ENCODE measurements at regions of chr7 and their contacts with region 1.

Region 1: DNA sequence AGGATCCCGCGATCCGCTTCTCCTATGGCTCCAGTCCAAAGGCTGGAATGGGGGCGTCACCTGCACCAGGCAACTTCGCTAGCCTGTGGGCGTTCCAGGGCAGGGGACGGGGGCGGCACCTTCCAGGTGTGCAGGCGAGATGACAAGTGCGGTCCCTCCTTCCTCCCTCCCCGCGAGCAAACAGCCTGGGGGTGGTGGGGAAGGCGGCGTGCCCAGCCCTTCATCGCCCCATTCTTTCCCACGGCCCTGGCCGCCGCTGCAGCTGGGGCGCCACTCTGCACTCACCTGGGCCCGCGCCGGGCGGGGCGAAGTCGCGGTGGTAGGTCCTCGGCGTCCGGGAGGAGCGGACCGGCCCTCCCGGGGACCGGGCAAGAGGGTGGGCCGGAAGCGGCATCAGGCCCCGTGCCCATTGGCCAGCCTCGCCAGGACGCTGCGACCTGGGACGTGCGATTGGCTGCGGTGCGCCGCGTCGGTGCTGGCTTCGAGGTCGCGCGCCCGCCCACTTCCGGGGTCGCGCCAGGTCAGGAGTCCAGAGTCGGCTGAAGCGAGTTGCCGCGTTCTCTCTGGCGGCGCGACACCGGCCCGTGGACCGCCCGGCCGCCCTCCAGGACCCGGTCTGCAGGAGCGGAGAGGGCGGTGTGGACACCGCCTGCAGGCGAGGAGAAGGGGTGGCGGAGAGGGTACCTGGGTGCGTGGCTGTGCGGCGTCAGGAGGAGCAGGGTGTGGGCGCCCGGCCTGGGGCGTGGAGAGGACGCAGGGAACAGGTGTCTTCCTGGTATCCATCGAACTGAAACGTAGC is at the start of gene TECPR1:
- DNase-seq: peak; percentile 68 to 94 (median 81)
- ATAC-seq: peak; percentile 70
- H3K4me3 ChIP-seq: peak within 1 kb of the TSS; percentile 90
- H3K4me3 Mint-ChIP-seq: peak within 1 kb of the TSS; percentile 94
- H3K27ac ChIP-seq: peak within 1 kb of the TSS; percentile 85 to 93
- H3K27ac Mint-ChIP-seq: peak within 1 kb of the TSS; percentile 98
- H3K4me1 ChIP-seq: peaks cover 64% of the 10 kb centered on the region
- H3K4me1 Mint-ChIP-seq: peaks cover 71% of the 10 kb centered on the region
- H3K27me3 ChIP-seq: no peaks in the 10 kb centered on the region
- H3K27me3 Mint-ChIP-seq: no peaks in the 10 kb centered on the region
- CTCF ChIP-seq: no peak
- total RNA-seq, gene TECPR1: 85.9 to 90.4 TPM

Region 2: DNA sequence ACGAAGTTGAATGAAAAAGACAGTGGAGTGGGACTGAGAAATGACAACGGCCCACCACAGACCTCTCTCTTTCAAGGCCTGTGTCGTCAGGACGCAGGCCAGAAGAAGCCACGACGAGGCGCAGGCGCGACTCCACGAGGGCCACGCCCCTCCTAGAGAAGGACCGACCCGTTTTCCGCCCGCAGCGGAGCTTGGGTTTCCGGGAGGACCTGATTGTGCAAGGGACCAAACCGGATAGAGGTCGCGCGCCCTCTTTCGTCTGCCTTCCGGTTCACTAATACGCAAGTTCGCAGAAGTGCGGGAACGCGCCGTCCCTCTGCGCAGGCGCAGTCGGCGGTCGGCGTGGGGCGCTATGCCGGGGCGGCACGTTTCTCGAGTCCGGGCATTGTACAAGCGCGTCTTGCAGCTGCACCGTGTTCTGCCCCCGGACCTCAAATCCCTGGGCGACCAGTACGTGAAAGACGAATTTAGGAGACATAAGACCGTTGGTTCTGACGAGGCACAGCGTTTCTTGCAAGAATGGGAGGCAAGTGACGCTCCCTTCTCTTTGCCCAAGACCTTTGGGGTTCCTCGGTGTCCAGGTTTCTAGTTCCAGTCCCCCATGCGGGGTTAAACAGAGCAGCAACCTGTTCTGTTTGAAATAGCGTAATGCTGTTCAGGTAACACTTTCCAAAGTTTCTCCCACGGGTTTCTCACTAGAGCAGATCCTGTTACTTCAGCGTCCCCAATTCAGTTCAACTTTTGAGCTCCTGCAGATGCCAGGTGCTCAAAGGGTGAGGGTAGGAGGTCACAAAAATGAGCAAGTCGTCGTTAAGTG is 1134.5 kb before region 1 on chr7 and contains the start of gene SDHAF3:
- CTCF ChIA-PET with region 1: no interaction called
- POLR2A ChIA-PET with region 1: interaction called, 4 read pairs
- intact Hi-C with region 1: loop called in 1 of 2 experiments (anchors 10 kb)
- DNase-seq: peak; percentile 96 to 99 (median 98)
- ATAC-seq: peak; percentile 93
- H3K4me3 ChIP-seq: peak within 1 kb of the TSS; percentile 82
- H3K4me3 Mint-ChIP-seq: peak within 1 kb of the TSS; percentile 97
- H3K27ac ChIP-seq: peak within 1 kb of the TSS; percentile 57 to 71
- H3K27ac Mint-ChIP-seq: peak within 1 kb of the TSS; percentile 89
- H3K4me1 ChIP-seq: peaks cover 10% of the 10 kb centered on the region
- H3K4me1 Mint-ChIP-seq: peaks cover 57% of the 10 kb centered on the region
- H3K27me3 ChIP-seq: no peaks in the 10 kb centered on the region
- H3K27me3 Mint-ChIP-seq: no peaks in the 10 kb centered on the region
- CTCF ChIP-seq: no peak
- total RNA-seq, gene SDHAF3: 3.2 to 5.0 TPM

Region 3: GRCh38 chr7:97859606-97860204 is 392.3 kb before region 1 on chr7:
- CTCF ChIA-PET with region 1: no interaction called
- POLR2A ChIA-PET with region 1: no interaction called
- intact Hi-C with region 1: no loop called
- DNase-seq: no peak
- ATAC-seq: no peak
- H3K4me3 ChIP-seq: no peak overlapping the region
- H3K4me3 Mint-ChIP-seq: no peak overlapping the region
- H3K27ac ChIP-seq: no peak overlapping the region
- H3K27ac Mint-ChIP-seq: no peak overlapping the region
- H3K4me1 ChIP-seq: no peaks in the 10 kb centered on the region
- H3K4me1 Mint-ChIP-seq: no peaks in the 10 kb centered on the region
- H3K27me3 ChIP-seq: no peaks in the 10 kb centered on the region
- H3K27me3 Mint-ChIP-seq: no peaks in the 10 kb centered on the region
- CTCF ChIP-seq: no peak

Region 4: GRCh38 chr7:97971990-97972943 is 279.8 kb before region 1 on chr7:
- CTCF ChIA-PET with region 1: no interaction called
- POLR2A ChIA-PET with region 1: no interaction called
- intact Hi-C with region 1: loop called (anchors 5 to 10 kb)
- DNase-seq: peak; percentile 71 to 91 (median 80)
- ATAC-seq: peak; percentile 93
- H3K4me3 ChIP-seq: peak overlapping the region; percentile 85
- H3K4me3 Mint-ChIP-seq: peak overlapping the region; percentile 96
- H3K27ac ChIP-seq: peak overlapping the region; percentile 76 to 79
- H3K27ac Mint-ChIP-seq: peak overlapping the region; percentile 93
- H3K4me1 ChIP-seq: peaks cover 17% of the 10 kb centered on the region
- H3K4me1 Mint-ChIP-seq: peaks cover 18% of the 10 kb centered on the region
- H3K27me3 ChIP-seq: no peaks in the 10 kb centered on the region
- H3K27me3 Mint-ChIP-seq: no peaks in the 10 kb centered on the region
- CTCF ChIP-seq: peak; percentile 28

Region 5: DNA sequence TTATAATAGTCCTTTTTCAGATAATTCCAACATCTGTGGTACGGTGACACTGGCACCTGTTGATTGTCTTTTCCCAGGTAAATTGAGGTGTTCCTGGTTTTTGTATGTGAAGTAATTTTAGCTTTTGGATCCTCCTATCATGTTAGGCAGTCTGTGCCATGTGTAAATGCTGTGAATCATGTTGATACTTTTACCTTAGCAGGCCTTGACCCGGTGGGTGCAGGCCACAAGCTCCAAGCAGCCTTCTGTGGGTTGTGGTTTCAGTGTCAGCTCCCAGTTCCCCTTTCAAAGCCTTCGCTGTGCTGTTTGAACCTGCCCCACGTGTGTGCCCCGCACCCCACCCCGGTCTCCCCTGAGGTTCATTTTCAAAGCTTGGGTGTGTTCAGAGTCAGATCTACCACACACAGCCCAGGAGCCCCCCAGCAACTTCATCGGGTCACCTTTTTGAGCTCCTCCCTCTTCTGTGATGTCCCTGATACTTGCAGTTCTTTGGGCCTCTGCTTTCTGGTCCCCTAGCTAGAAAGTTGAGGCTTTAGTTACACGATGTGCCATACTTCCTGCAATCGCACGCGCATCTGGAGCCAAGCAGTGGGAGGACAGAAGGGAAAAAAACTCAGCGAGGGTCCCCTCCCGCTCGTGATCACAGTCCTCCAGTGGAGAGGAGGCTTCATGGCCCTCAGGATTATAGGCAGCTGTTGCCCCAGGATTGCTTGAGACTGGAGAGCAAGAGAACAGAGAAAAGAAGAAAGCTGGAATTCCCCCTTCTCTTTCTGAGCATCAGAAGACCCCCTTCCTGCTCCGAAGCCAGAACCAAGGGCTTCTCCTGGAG is 49.5 kb before region 1 on chr7:
- CTCF ChIA-PET with region 1: no interaction called
- POLR2A ChIA-PET with region 1: interaction called, 62 read pairs
- intact Hi-C with region 1: loop called in 1 of 2 experiments (anchors 2 kb)
- DNase-seq: peak; percentile 33 to 77 (median 60)
- ATAC-seq: peak; percentile 92
- H3K4me3 ChIP-seq: peak overlapping the region; percentile 25
- H3K4me3 Mint-ChIP-seq: peak overlapping the region; percentile 76
- H3K27ac ChIP-seq: peak overlapping the region; percentile 24 to 40
- H3K27ac Mint-ChIP-seq: peak overlapping the region; percentile 80
- H3K4me1 ChIP-seq: peaks cover 36% of the 10 kb centered on the region
- H3K4me1 Mint-ChIP-seq: peaks cover 61% of the 10 kb centered on the region
- H3K27me3 ChIP-seq: no peaks in the 10 kb centered on the region
- H3K27me3 Mint-ChIP-seq: no peaks in the 10 kb centered on the region
- CTCF ChIP-seq: no peak

Region 6: DNA sequence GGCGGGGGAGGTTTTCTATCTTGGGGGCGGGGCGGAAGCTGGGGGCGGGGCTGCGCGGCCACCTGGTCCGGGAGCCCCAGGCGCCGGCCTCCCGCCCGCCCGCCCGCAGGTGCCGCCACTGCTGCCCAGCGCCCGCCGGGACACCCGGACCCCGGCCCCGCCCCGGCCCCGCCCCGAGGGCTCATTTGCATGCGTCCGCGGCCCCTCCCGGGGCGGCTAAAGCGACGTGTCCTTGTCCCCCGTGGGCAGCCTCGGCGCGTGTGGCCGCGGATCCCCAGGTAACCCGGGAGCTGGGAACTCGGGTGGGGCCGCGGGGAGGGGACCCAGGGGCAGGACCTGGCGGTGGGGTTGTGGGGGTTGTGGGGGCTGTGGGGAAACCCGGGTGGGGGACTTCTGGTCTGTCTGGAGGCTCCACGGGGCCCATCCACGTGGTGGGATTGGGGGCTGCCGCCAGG is 40.8 kb before region 1 on chr7 and contains the start of gene BHLHA15:
- CTCF ChIA-PET with region 1: no interaction called
- POLR2A ChIA-PET with region 1: interaction called, 62 read pairs
- intact Hi-C with region 1: loop called in 1 of 2 experiments (anchors 5 kb)
- DNase-seq: peak in 7 of 14 experiments; percentile 14 to 58 (median 39)
- ATAC-seq: peak; percentile 29
- H3K4me3 ChIP-seq: peak within 1 kb of the TSS; percentile 26
- H3K4me3 Mint-ChIP-seq: peak within 1 kb of the TSS; percentile 63
- H3K27ac ChIP-seq: no peak within 1 kb of the TSS
- H3K27ac Mint-ChIP-seq: no peak within 1 kb of the TSS
- H3K4me1 ChIP-seq: peaks cover 13% of the 10 kb centered on the region
- H3K4me1 Mint-ChIP-seq: peaks cover 10% of the 10 kb centered on the region
- H3K27me3 ChIP-seq: no peaks in the 10 kb centered on the region
- H3K27me3 Mint-ChIP-seq: no peaks in the 10 kb centered on the region
- CTCF ChIP-seq: no peak
- total RNA-seq, gene BHLHA15: not detected

Region 7: GRCh38 chr7:98878365-98879165 is 626.5 kb after region 1 on chr7 and contains the start of gene TRRAP:
- CTCF ChIA-PET with region 1: no interaction called
- POLR2A ChIA-PET with region 1: interaction called, 16 read pairs
- intact Hi-C with region 1: no loop called
- DNase-seq: peak; percentile 60 to 88 (median 70)
- ATAC-seq: peak; percentile 56
- H3K4me3 ChIP-seq: peak within 1 kb of the TSS; percentile 97
- H3K4me3 Mint-ChIP-seq: peak within 1 kb of the TSS; percentile 97
- H3K27ac ChIP-seq: peak within 1 kb of the TSS; percentile 87 to 91
- H3K27ac Mint-ChIP-seq: peak within 1 kb of the TSS; percentile 97
- H3K4me1 ChIP-seq: peaks cover 27% of the 10 kb centered on the region
- H3K4me1 Mint-ChIP-seq: peaks cover 31% of the 10 kb centered on the region
- H3K27me3 ChIP-seq: no peaks in the 10 kb centered on the region
- H3K27me3 Mint-ChIP-seq: no peaks in the 10 kb centered on the region
- CTCF ChIP-seq: peak; percentile 89
- total RNA-seq, gene TRRAP: 47.9 to 48.3 TPM